CD4-positive, alpha-beta T cell (primary cell): ENCODE measurements at regions of chr18 and their contacts with region 1.

Region 1: DNA sequence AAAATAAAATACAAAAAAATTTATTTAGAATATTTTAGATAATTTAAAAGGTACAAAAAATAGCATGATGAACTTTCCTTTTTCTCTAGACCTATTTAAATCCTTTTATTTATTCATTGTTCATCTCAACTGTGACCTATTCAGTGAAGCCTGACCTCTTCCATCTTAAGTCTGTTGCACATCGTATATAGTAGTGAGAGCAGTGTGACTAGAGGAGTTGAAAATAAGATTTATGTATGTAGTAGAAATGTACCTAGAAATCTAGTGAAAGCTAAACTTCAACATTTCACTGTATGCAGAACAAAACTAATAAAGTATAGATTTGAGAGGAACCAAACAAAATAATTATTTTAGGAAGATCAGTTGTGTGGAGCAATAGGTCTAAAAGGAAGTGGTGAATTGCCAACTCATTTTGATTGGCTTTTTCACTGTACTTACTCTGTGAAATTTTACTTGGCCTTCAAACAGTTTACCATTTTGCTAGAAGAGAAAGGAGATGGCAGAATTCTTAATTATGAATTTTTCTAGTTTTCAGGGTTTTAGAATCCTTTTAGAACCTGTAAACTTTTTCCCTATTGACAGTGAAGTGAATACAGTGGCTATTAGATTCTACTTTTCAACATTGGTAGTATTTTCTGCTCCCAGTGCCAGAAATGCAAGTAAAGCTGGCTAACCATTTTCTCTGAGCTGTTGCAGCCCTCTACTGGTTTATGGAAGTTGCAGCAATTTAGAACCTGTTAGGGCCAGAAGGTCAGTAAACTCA is 11.0 kb downstream of the ANKRD12 start:
- DNase-seq: peak in 7 of 14 experiments; percentile 18 to 81 (median 44)
- ATAC-seq: peak; percentile 74
- H3K4me3 ChIP-seq: no peak overlapping the region
- H3K4me3 Mint-ChIP-seq: no peak overlapping the region
- H3K27ac ChIP-seq: no peak overlapping the region
- H3K27ac Mint-ChIP-seq: peak overlapping the region; percentile 10
- H3K4me1 ChIP-seq: peaks cover 28% of the 10 kb centered on the region
- H3K4me1 Mint-ChIP-seq: peaks cover 85% of the 10 kb centered on the region
- H3K27me3 ChIP-seq: no peaks in the 10 kb centered on the region
- H3K27me3 Mint-ChIP-seq: no peaks in the 10 kb centered on the region
- CTCF ChIP-seq: peak; percentile 76

Region 2: GRCh38 chr18:9102508-9103375 is 44.9 kb before region 1 on chr18 and contains the start of gene NDUFV2:
- CTCF ChIA-PET with region 1: interaction called, 66 read pairs
- POLR2A ChIA-PET with region 1: interaction called, 914 read pairs
- intact Hi-C with region 1: loop called in 1 of 2 experiments (anchors 2 kb)
- DNase-seq: peak; percentile 93 to 99 (median 98)
- ATAC-seq: peak; percentile 87
- H3K4me3 ChIP-seq: peak within 1 kb of the TSS; percentile 74
- H3K4me3 Mint-ChIP-seq: peak within 1 kb of the TSS; percentile 95
- H3K27ac ChIP-seq: peak within 1 kb of the TSS; percentile 82 to 91
- H3K27ac Mint-ChIP-seq: peak within 1 kb of the TSS; percentile 90
- H3K4me1 ChIP-seq: peaks cover 22% of the 10 kb centered on the region
- H3K4me1 Mint-ChIP-seq: peaks cover 65% of the 10 kb centered on the region
- H3K27me3 ChIP-seq: no peaks in the 10 kb centered on the region
- H3K27me3 Mint-ChIP-seq: no peaks in the 10 kb centered on the region
- CTCF ChIP-seq: no peak
- total RNA-seq, gene NDUFV2: 230 to 231 TPM

Region 3: DNA sequence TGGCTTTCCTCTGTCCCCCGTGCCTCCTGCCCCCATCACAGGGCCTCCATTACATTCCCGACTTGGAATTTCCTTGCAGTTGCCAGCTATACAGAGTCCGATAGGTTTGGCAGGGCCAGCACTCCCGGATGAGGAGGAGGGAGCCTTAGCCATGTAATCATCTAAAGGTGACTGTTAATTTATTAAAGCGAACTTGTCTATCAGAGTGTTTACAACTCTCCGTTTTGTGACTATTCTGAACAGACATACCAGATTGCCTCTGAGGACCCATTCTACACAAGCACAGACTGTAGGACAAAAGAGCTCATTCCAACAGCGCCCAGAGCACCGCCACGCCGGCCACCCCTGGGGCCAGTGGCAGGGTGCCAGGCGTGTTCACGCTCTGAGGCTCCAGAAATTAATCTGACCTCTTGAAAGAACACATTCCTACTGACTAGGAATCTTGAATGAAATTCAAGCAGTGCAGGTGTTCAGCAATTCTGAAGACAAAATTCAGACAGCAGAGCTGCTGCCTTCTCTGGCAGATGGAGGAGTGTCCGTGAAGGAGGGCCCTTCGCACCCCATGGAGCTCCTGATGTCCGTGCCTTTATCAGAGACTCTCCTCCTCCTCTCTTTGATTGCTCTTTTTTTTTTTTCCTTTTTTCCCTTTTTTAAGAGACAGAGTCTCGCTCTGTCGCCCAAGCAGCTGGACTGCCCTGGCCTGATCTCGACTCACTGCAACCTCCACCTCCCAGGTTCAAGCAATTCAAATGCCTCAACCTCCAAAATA is 269.6 kb after region 1 on chr18:
- CTCF ChIA-PET with region 1: no interaction called
- POLR2A ChIA-PET with region 1: no interaction called
- intact Hi-C with region 1: no loop called
- DNase-seq: no peak
- ATAC-seq: no peak
- H3K4me3 ChIP-seq: no peak overlapping the region
- H3K4me3 Mint-ChIP-seq: no peak overlapping the region
- H3K27ac ChIP-seq: no peak overlapping the region
- H3K27ac Mint-ChIP-seq: no peak overlapping the region
- H3K4me1 ChIP-seq: no peaks in the 10 kb centered on the region
- H3K4me1 Mint-ChIP-seq: no peaks in the 10 kb centered on the region
- H3K27me3 ChIP-seq: no peaks in the 10 kb centered on the region
- H3K27me3 Mint-ChIP-seq: no peaks in the 10 kb centered on the region
- CTCF ChIP-seq: no peak

Region 4: GRCh38 chr18:9757748-9758621 is 610.4 kb after region 1 on chr18:
- CTCF ChIA-PET with region 1: no interaction called
- POLR2A ChIA-PET with region 1: no interaction called
- intact Hi-C with region 1: no loop called
- DNase-seq: peak in 2 of 14 experiments; percentile 44 to 49
- ATAC-seq: no peak
- H3K4me3 ChIP-seq: no peak overlapping the region
- H3K4me3 Mint-ChIP-seq: no peak overlapping the region
- H3K27ac ChIP-seq: no peak overlapping the region
- H3K27ac Mint-ChIP-seq: no peak overlapping the region
- H3K4me1 ChIP-seq: no peaks in the 10 kb centered on the region
- H3K4me1 Mint-ChIP-seq: no peaks in the 10 kb centered on the region
- H3K27me3 ChIP-seq: peaks cover 0 to 3% of the 10 kb centered on the region in 2 experiments
- H3K27me3 Mint-ChIP-seq: peaks cover 5% of the 10 kb centered on the region
- CTCF ChIP-seq: no peak